ENCODE measurements at regions of chr1 and their contacts with region 1.

Region 1: DNA sequence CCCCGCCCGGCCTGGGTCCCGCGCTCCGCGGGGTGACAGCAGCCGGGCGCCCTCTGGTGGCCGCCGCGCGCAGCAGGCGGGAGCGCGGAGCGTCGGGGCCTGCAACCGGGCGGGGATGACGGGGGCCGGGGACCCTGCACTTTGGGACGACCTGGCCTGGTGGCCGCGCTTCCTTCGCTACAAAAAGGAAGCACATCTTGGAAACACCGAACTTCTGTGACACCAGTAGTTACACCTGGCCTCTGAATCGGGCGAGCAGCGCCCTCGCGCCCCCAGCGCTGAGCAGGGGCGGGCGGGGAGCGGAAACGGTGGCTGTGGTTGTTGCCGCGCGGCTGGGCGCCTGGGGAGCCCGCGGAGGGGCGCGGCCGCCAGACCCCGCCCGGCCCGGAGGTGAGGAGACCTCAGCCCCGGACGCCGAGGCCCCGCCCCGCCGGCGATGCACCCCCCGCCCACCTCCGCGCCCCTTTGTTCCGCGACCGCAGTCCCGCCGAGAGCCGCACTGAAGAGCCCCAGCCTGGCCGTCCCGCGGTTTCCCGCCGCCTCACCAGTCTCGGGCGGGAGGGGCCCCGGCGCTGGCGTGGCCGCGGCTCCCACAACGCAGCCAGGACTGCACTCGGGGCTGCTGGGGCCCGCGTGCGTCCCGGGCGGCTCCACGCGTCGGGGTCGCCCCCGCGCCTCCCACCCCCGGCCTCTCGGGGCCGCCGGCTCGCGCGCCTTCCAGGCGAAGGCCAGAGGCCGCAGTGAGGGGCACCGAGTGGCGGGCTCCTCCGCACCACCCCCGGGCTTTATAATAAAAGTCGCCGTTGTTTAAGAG is 59.3 kb downstream of the H3-3A start:
- DNase-seq: peak; percentile 78 to 88
- ATAC-seq: peak; percentile 72 to 87 (median 75)
- H3K4me3 ChIP-seq: peak overlapping the region; percentile 41
- H3K4me3 Mint-ChIP-seq: peak overlapping the region; percentile 85
- H3K27ac ChIP-seq: peak overlapping the region; percentile 77
- H3K27ac Mint-ChIP-seq: peak overlapping the region; percentile 81 to 84
- H3K4me1 ChIP-seq: peaks cover 49% of the 10 kb centered on the region
- H3K4me1 Mint-ChIP-seq: peaks cover 18 to 34% of the 10 kb centered on the region in 2 donors
- H3K27me3 ChIP-seq: no peaks in the 10 kb centered on the region
- H3K27me3 Mint-ChIP-seq: peaks cover 0 to 3% of the 10 kb centered on the region in 2 donors
- CTCF ChIP-seq: peak; percentile 86

Region 2: DNA sequence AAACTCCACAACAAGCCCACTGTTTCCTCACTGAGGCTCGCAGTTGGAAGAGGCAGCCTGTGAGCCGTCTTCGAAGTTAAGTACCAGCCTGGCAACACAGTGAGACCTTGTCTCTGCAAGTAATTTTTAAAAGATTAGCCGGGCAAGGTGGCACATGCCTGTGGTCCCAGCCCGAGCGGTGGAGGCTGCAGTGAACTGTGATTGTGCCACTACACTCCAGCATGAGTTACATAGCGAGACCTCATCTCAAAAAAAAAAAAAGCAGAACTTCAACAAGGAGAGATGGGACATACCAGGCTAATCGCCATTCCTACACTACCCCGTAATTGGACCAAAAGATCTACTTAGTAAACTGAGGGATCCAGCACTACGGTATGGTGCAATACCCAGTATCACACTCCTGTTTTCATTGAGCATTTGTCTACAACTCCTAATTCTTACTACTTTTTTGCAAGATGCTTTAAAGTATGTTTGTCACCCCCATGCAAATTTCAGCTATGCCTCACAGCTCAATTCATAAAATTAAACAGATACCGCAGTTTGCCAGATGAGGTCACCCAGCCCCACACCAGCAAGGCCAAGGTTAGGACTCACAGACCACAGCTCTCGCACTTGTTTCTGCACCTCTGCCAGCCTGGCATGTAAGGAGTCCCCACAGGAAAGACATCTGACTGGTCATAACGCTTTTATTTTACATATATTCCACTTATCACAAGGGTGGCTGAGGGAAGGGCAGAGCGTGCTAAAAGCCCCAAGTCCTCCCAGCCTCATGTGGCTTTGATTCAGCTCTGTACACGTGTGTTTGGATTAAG is 143.7 kb before region 1 on chr1:
- intact Hi-C with region 1: loop called (anchors 5 kb)
- DNase-seq: peak; percentile 25 to 65
- ATAC-seq: peak; percentile 81 to 89 (median 83)
- H3K4me3 ChIP-seq: no peak overlapping the region
- H3K4me3 Mint-ChIP-seq: peak overlapping the region; percentile 56
- H3K27ac ChIP-seq: peak overlapping the region; percentile 41
- H3K27ac Mint-ChIP-seq: peak overlapping the region; percentile 47 to 66
- H3K4me1 ChIP-seq: peaks cover 22% of the 10 kb centered on the region
- H3K4me1 Mint-ChIP-seq: peaks cover 16 to 17% of the 10 kb centered on the region in 2 donors
- H3K27me3 ChIP-seq: no peaks in the 10 kb centered on the region
- H3K27me3 Mint-ChIP-seq: no peaks in the 10 kb centered on the region
- CTCF ChIP-seq: no peak

Region 3: DNA sequence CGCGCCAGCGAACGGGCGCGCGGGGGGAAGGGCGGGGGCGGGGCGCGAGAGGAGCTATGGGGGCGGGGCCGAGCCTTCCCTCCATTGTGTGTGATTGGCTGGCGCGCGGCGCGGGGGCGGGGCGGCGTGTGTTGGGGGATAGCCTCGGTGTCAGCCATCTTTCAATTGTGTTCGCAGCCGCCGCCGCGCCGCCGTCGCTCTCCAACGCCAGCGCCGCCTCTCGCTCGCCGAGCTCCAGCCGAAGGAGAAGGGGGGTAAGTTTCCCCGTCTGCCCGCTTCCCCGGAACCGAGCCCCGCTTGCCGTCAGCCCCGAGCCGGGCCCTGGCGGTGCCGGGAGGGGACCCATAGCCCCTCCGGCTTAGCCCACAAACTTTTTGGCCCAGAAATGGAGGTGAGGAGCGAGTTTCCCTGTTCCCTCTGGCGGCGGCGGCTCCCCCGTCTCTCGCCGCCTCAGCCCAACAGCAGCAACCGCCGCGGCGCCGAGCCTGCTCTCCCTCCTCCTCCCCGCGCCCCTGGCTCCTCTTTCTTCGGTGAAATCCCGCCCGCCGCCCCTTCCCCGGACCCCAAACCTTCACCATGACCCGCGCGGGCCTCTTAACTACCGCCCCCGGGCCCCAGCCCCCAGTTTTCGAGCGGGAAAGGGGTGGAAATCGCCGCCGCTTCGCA is 59.1 kb before region 1 on chr1 and contains the start of gene H3-3A:
- intact Hi-C with region 1: loop called (anchors 1 kb)
- DNase-seq: peak; percentile 97 to 98
- ATAC-seq: peak; percentile 81 to 96 (median 84)
- H3K4me3 ChIP-seq: peak within 1 kb of the TSS; percentile 63
- H3K4me3 Mint-ChIP-seq: peak within 1 kb of the TSS; percentile 100
- H3K27ac ChIP-seq: peak within 1 kb of the TSS; percentile 96
- H3K27ac Mint-ChIP-seq: peak within 1 kb of the TSS; percentile 99
- H3K4me1 ChIP-seq: peaks cover 18% of the 10 kb centered on the region
- H3K4me1 Mint-ChIP-seq: peaks cover 50% of the 10 kb centered on the region in 2 donors
- H3K27me3 ChIP-seq: no peaks in the 10 kb centered on the region
- H3K27me3 Mint-ChIP-seq: no peaks in the 10 kb centered on the region
- CTCF ChIP-seq: no peak
- total RNA-seq, gene H3-3A: 490 to 616 (median 522) TPM

Region 4: GRCh38 chr1:226074046-226074445 is 47.7 kb before region 1 on chr1:
- intact Hi-C with region 1: no loop called
- DNase-seq: no peak
- ATAC-seq: peak in 1 of 3 donors; percentile 17
- H3K4me3 ChIP-seq: no peak overlapping the region
- H3K4me3 Mint-ChIP-seq: peak overlapping the region; percentile 7
- H3K27ac ChIP-seq: no peak overlapping the region
- H3K27ac Mint-ChIP-seq: peak overlapping the region; percentile 51 to 73
- H3K4me1 ChIP-seq: peaks cover 4% of the 10 kb centered on the region
- H3K4me1 Mint-ChIP-seq: peaks cover 25 to 30% of the 10 kb centered on the region in 2 donors
- H3K27me3 ChIP-seq: no peaks in the 10 kb centered on the region
- H3K27me3 Mint-ChIP-seq: no peaks in the 10 kb centered on the region
- CTCF ChIP-seq: no peak

Region 5: DNA sequence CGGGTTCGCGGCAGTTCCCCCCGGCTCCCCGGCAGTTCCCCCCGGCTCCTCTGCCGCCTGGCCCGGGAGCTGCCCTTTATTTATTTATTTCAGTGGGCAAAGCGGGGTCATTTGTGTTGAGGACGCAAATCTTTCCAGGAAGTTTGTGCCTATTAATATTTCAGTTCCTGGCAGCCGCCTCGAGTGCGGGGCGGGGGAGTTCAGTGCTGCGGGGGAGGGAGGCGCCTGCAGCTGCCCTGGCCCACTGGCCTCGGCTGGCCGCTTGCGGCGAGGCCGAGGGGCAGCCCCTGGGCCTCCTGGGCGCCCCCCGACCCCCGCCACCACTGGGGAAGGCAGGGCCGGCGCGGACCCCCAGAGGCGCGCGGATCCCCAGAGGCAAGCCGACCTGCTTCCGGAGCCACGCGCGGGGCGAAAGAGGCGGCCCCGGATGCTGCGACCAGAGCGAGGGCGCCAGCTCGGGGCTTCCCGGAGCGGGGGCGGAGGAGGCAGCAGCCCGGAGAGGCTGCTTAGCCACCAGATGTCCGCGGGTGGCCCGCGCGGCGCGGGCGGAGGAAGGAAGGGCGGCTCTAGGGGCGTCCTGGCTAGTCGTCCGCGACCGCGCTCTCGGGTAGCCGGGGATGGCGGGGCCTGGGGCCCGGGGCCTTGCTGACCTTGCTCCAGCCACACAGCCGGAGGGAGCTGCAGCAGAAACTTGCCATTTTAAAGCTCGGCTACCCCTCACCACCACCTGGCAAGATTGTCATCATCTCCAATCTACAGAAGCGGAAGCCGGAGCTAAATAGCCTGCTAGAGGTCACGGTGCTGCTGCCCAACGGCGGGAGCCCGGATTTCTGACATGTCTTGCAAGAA is 11.3 kb before region 1 on chr1:
- intact Hi-C with region 1: loop called (anchors 1 kb)
- DNase-seq: peak; percentile 76
- ATAC-seq: peak; percentile 81 to 90 (median 85)
- H3K4me3 ChIP-seq: peak overlapping the region; percentile 71
- H3K4me3 Mint-ChIP-seq: peak overlapping the region; percentile 98
- H3K27ac ChIP-seq: peak overlapping the region; percentile 98
- H3K27ac Mint-ChIP-seq: peak overlapping the region; percentile 96 to 98
- H3K4me1 ChIP-seq: peaks cover 21% of the 10 kb centered on the region
- H3K4me1 Mint-ChIP-seq: peaks cover 14 to 21% of the 10 kb centered on the region in 2 donors
- H3K27me3 ChIP-seq: no peaks in the 10 kb centered on the region
- H3K27me3 Mint-ChIP-seq: no peaks in the 10 kb centered on the region
- CTCF ChIP-seq: no peak

Region 6: DNA sequence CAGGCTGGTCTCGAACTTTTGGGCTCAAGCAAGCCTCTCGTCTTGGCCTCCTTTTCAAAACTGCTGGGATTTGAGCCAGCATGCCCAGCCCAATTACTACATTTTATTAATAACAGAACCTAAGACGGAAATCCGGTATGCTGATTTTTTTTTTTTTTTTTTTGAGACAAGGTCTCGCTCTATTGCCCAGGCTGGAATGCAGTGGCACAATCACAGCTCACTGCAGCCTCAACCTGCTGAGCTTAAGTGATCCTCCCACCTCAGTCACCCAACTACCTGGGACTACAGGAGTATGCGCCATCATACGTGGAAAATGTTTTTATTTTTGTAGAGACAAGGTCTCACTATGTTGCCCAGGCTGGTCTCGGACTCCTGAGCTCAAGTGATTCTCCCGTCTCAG is 44.5 kb after region 1 on chr1:
- intact Hi-C with region 1: no loop called
- DNase-seq: no peak
- ATAC-seq: no peak
- H3K4me3 ChIP-seq: no peak overlapping the region
- H3K4me3 Mint-ChIP-seq: no peak overlapping the region
- H3K27ac ChIP-seq: no peak overlapping the region
- H3K27ac Mint-ChIP-seq: no peak overlapping the region
- H3K4me1 ChIP-seq: no peaks in the 10 kb centered on the region
- H3K4me1 Mint-ChIP-seq: peaks cover 17 to 22% of the 10 kb centered on the region in 2 donors
- H3K27me3 ChIP-seq: no peaks in the 10 kb centered on the region
- H3K27me3 Mint-ChIP-seq: no peaks in the 10 kb centered on the region
- CTCF ChIP-seq: no peak

Region 7: GRCh38 chr1:226201029-226201593 is 79.3 kb after region 1 on chr1:
- intact Hi-C with region 1: loop called (anchors 1 kb)
- DNase-seq: no peak
- ATAC-seq: no peak
- H3K4me3 ChIP-seq: no peak overlapping the region
- H3K4me3 Mint-ChIP-seq: no peak overlapping the region
- H3K27ac ChIP-seq: no peak overlapping the region
- H3K27ac Mint-ChIP-seq: no peak overlapping the region
- H3K4me1 ChIP-seq: no peaks in the 10 kb centered on the region
- H3K4me1 Mint-ChIP-seq: peaks cover 0 to 5% of the 10 kb centered on the region in 2 donors
- H3K27me3 ChIP-seq: no peaks in the 10 kb centered on the region
- H3K27me3 Mint-ChIP-seq: peaks cover 0 to 12% of the 10 kb centered on the region in 2 donors
- CTCF ChIP-seq: no peak

Measured in natural killer cell (primary cell).